AG04450 (cell line): ENCODE measurements at regions of chr1 and their contacts with region 1.

Region 1: GRCh38 chr1:24391882-24392603 is 21.5 kb downstream of the STPG1 start:
- DNase-seq: no peak
- H3K4me3 ChIP-seq: no peak overlapping the region
- H3K27ac ChIP-seq: no peak overlapping the region
- H3K27me3 ChIP-seq: no peaks in the 10 kb centered on the region
- CTCF ChIP-seq: peak; percentile 83

Region 2: GRCh38 chr1:24191860-24192259 is 200.2 kb before region 1 on chr1:
- CTCF ChIA-PET with region 1: interaction called, 659 read pairs
- POLR2A ChIA-PET with region 1: interaction called, 3 read pairs
- DNase-seq: no peak
- H3K4me3 ChIP-seq: no peak overlapping the region
- H3K27ac ChIP-seq: no peak overlapping the region
- H3K27me3 ChIP-seq: peaks cover 11% of the 10 kb centered on the region
- CTCF ChIP-seq: no peak

Region 3: GRCh38 chr1:24209090-24209489 is 183.0 kb before region 1 on chr1:
- CTCF ChIA-PET with region 1: interaction called, 110 read pairs
- POLR2A ChIA-PET with region 1: no interaction called
- DNase-seq: no peak
- H3K4me3 ChIP-seq: no peak overlapping the region
- H3K27ac ChIP-seq: no peak overlapping the region
- H3K27me3 ChIP-seq: peaks cover 11% of the 10 kb centered on the region
- CTCF ChIP-seq: no peak

Region 4: GRCh38 chr1:24364975-24365678 is 26.9 kb before region 1 on chr1:
- CTCF ChIA-PET with region 1: interaction called, 14 read pairs
- POLR2A ChIA-PET with region 1: no interaction called
- DNase-seq: peak; percentile 63
- H3K4me3 ChIP-seq: no peak overlapping the region
- H3K27ac ChIP-seq: peak overlapping the region; percentile 31
- H3K27me3 ChIP-seq: no peaks in the 10 kb centered on the region
- CTCF ChIP-seq: no peak

Region 5: GRCh38 chr1:24403806-24404205 is 11.8 kb after region 1 on chr1:
- CTCF ChIA-PET with region 1: interaction called, 20 read pairs
- POLR2A ChIA-PET with region 1: no interaction called
- DNase-seq: no peak
- H3K4me3 ChIP-seq: no peak overlapping the region
- H3K27ac ChIP-seq: no peak overlapping the region
- H3K27me3 ChIP-seq: no peaks in the 10 kb centered on the region
- CTCF ChIP-seq: no peak

Region 6: GRCh38 chr1:24415334-24415909 is 23.4 kb after region 1 on chr1 and contains the start of gene NIPAL3:
- CTCF ChIA-PET with region 1: interaction called, 14 read pairs
- POLR2A ChIA-PET with region 1: interaction called, 6 read pairs
- DNase-seq: peak; percentile 98
- H3K4me3 ChIP-seq: peak within 1 kb of the TSS; percentile 94
- H3K27ac ChIP-seq: peak within 1 kb of the TSS; percentile 94
- H3K27me3 ChIP-seq: no peaks in the 10 kb centered on the region
- CTCF ChIP-seq: peak; percentile 68
- polyA plus RNA-seq, gene NIPAL3: 46.5 and 48.5 TPM in 2 replicates

Region 7: GRCh38 chr1:24468685-24469316 is 76.8 kb after region 1 on chr1:
- CTCF ChIA-PET with region 1: no interaction called
- POLR2A ChIA-PET with region 1: no interaction called
- DNase-seq: no peak
- H3K4me3 ChIP-seq: no peak overlapping the region
- H3K27ac ChIP-seq: no peak overlapping the region
- H3K27me3 ChIP-seq: no peaks in the 10 kb centered on the region
- CTCF ChIP-seq: no peak

Region 8: DNA sequence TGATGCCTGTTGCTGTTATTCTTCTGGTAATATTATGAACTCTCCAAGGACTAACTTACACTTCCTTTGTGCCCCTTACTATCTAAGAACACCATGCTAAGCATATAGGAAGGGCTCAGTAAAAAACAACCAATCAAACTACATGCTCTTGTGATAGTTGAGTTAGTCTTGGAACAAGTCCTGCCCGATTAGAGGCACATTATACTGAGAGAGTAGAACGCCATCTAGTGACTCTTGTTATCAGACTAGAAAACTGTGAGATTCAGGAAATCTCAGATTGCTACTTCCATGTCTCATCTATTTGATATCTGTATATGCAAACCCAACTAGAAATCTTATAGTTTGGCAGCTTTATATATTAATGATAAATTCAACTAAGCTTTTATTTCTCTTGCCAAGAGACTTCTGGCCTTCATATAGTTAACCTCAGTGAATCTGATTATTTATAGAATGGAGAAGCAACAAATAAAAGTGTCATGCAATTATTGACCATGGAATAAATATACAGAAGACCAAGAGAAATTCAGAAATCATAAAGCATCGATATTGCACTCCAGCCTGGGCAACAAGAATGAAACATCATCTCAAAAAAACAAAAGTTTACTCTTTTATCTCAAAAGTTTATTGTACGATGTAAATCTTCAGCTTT is 243.3 kb after region 1 on chr1:
- CTCF ChIA-PET with region 1: interaction called, 42 read pairs
- POLR2A ChIA-PET with region 1: no interaction called
- DNase-seq: peak; percentile 41
- H3K4me3 ChIP-seq: no peak overlapping the region
- H3K27ac ChIP-seq: no peak overlapping the region
- H3K27me3 ChIP-seq: peaks cover 10% of the 10 kb centered on the region
- CTCF ChIP-seq: peak; percentile 69

Region 9: GRCh38 chr1:24743404-24744211 is 351.6 kb after region 1 on chr1:
- CTCF ChIA-PET with region 1: no interaction called
- POLR2A ChIA-PET with region 1: no interaction called
- DNase-seq: no peak
- H3K4me3 ChIP-seq: no peak overlapping the region
- H3K27ac ChIP-seq: peak overlapping the region; percentile 85
- H3K27me3 ChIP-seq: no peaks in the 10 kb centered on the region
- CTCF ChIP-seq: no peak